Dorsolateral prefrontal cortex (tissue), 120 donors: ENCODE measurements at regions of chr22 and their contacts with region 1.

Region 1: GRCh38 chr22:48121984-48122383 is 1359.5 kb downstream of the TBC1D22A start:
- DNase-seq: no peak
- H3K4me3 ChIP-seq: no peak overlapping the region
- H3K27ac ChIP-seq: no peak overlapping the region
- H3K27me3 ChIP-seq: peaks cover 0 to 13% (median 0%) of the 10 kb centered on the region in 45 donors
- CTCF ChIP-seq: no peak

Region 2: GRCh38 chr22:47695176-47695575 is 426.8 kb before region 1 on chr22:
- intact Hi-C with region 1: loop called in 1 of 2 experiments (anchors 5 kb)
- DNase-seq: no peak
- H3K4me3 ChIP-seq: no peak overlapping the region
- H3K27ac ChIP-seq: no peak overlapping the region
- H3K27me3 ChIP-seq: no peaks in the 10 kb centered on the region
- CTCF ChIP-seq: no peak